Right ventricle myocardium superior (tissue), 1 donor: ENCODE measurements at regions of chr1 and their contacts with region 1.

Region 1: DNA sequence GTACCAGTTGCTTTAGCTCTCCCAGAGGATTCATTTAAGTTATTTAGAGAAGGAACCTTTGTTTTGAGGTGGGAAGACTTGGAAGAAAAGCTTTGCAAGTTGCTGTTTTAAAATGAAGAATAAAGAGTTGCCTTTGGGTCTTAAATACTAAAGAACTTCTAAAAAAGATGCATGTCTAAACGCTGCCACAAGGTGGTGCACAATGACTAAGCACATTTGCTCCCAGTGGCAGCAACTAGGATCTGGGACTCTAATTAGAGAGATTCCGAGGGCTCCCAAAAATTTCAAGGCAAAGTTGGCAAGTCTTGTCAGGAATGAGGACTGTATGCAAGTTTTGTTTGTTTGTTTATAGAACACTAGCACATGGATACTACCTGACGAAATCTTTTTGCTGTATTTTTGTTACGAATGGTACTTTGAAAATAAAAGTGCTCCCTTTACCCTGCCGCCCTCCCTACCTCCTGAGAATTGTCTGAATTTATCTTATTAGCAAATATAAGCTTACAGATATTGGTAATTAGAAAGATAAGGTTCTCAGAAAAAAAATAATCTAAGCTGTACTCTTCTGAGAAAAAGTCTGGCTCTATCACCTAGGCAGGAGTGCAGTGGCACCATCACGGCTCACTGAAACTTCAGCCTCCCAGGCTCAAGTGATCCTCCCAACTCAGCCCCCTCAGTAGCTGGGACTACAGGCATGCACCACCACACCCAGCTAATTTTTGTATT is 121.8 kb downstream of the HFM1 start:
- DNase-seq: no peak
- ATAC-seq: peak; percentile 91

Region 2: GRCh38 chr1:91404151-91405012 is 121.5 kb after region 1 on chr1 and contains the start of gene HFM1:
- intact Hi-C with region 1: loop called (anchors 5 kb)
- DNase-seq: peak; percentile 92
- ATAC-seq: peak; percentile 100
- total RNA-seq, gene HFM1: 2.1 TPM

Region 3: DNA sequence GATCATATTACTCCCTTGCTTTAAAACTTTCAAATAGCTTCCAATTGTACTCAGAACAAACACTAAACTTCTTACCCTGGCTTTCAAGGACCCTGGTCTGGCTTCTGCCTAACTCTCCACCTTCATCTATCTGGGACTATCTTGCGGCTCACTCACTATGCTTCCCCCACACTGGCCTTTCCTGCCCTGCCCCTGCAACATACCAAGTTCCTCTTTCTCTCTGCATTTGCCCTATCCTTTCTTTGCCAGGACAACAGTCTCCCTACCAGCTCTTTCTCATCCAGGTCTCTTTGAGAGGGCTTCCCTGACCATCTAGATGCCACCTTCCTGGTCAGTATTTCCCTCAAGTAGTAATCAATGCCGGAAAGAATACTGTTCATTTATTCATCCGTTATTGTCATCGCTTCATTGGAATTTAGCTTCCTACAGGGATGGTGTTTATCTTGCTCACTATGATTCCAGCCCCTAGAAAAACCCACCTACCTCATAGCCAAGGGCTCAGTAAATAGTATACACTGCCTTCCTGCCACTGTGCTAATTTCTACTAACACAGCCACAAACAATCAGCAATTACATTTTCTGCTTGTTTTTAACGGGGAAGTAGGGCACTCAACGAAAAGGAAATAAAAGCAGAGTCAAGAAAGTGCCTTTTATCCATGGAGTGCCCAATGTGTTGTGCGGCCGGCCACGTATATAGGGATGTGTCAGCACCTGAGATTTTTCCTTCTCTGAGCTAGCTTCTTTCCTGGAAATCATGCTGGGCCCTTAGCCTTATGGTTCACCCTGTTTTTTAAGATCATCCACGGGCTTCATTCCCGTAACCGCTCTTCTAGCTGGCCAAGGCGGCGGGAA is 217.3 kb after region 1 on chr1:
- intact Hi-C with region 1: loop called (anchors 10 kb)
- DNase-seq: no peak
- ATAC-seq: no peak